ENCODE measurements at regions of chr2 and their contacts with region 1.

Region 1: GRCh38 chr2:146927080-146927711 is 917.6 kb upstream of the ACVR2A start:
- DNase-seq: peak; percentile 76
- H3K4me3 Mint-ChIP-seq: no peak overlapping the region
- H3K27ac Mint-ChIP-seq: no peak overlapping the region
- H3K4me1 Mint-ChIP-seq: peaks cover 13% of the 10 kb centered on the region
- H3K27me3 Mint-ChIP-seq: no peaks in the 10 kb centered on the region
- CTCF ChIP-seq: peak; percentile 55

Region 2: GRCh38 chr2:146734042-146734820 is 193.0 kb before region 1 on chr2:
- CTCF ChIA-PET with region 1: interaction called, 9 read pairs
- intact Hi-C with region 1: loop called (anchors 2 kb)
- DNase-seq: peak; percentile 16
- H3K4me3 Mint-ChIP-seq: no peak overlapping the region
- H3K27ac Mint-ChIP-seq: no peak overlapping the region
- H3K4me1 Mint-ChIP-seq: no peaks in the 10 kb centered on the region
- H3K27me3 Mint-ChIP-seq: no peaks in the 10 kb centered on the region
- CTCF ChIP-seq: peak; percentile 49

Region 3: GRCh38 chr2:146853741-146854444 is 73.3 kb before region 1 on chr2:
- CTCF ChIA-PET with region 1: no interaction called
- intact Hi-C with region 1: no loop called
- DNase-seq: no peak
- H3K4me3 Mint-ChIP-seq: no peak overlapping the region
- H3K27ac Mint-ChIP-seq: no peak overlapping the region
- H3K4me1 Mint-ChIP-seq: no peaks in the 10 kb centered on the region
- H3K27me3 Mint-ChIP-seq: no peaks in the 10 kb centered on the region
- CTCF ChIP-seq: no peak

Region 4: DNA sequence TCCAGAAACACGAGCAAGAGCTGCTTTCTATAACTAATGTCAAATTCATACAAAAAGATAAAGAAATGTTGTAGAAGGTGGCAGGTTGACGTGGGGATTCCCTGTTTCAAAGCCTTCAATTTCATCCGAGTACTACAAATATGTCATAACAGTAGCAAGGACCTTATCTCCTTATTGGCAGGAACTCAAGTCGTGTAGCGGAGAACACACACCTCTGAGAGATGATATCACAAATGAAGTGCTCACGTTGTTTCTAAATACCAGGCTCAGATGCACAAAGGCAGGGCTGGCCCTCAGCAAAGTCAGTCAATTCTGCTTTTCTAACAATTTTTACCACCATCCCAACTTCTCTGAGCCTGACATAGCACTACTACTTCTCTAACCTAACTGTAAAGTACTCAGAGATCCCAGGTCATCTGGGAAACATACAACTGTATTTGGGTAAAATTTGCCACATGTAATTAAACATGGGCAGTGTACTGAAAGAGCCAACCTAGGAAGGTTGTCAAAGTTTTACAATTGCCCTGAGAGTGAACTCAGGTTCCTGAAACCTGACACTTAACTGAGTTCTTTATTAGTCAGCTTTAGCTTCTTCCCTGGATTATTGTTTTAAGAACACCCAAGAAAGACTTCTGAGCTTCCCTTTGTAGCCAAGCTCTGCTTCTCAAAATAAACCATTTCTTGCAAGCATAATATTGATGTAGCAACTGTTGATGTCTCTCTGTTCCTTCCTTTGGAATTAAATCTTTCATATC is 103.9 kb after region 1 on chr2:
- CTCF ChIA-PET with region 1: interaction called, 4 read pairs
- intact Hi-C with region 1: loop called (anchors 2 kb)
- DNase-seq: peak; percentile 36
- H3K4me3 Mint-ChIP-seq: peak overlapping the region; percentile 64
- H3K27ac Mint-ChIP-seq: peak overlapping the region; percentile 79
- H3K4me1 Mint-ChIP-seq: peaks cover 71% of the 10 kb centered on the region
- H3K27me3 Mint-ChIP-seq: no peaks in the 10 kb centered on the region
- CTCF ChIP-seq: no peak

Region 5: GRCh38 chr2:147045113-147045512 is 117.9 kb after region 1 on chr2:
- CTCF ChIA-PET with region 1: interaction called, 11 read pairs
- intact Hi-C with region 1: no loop called
- DNase-seq: peak; percentile 77
- H3K4me3 Mint-ChIP-seq: no peak overlapping the region
- H3K27ac Mint-ChIP-seq: peak overlapping the region; percentile 2
- H3K4me1 Mint-ChIP-seq: peaks cover 22% of the 10 kb centered on the region
- H3K27me3 Mint-ChIP-seq: no peaks in the 10 kb centered on the region
- CTCF ChIP-seq: peak; percentile 82

Region 6: GRCh38 chr2:147082850-147083522 is 155.8 kb after region 1 on chr2:
- CTCF ChIA-PET with region 1: interaction called, 6 read pairs
- intact Hi-C with region 1: loop called (anchors 5 kb)
- DNase-seq: peak; percentile 68
- H3K4me3 Mint-ChIP-seq: no peak overlapping the region
- H3K27ac Mint-ChIP-seq: no peak overlapping the region
- H3K4me1 Mint-ChIP-seq: peaks cover 16% of the 10 kb centered on the region
- H3K27me3 Mint-ChIP-seq: no peaks in the 10 kb centered on the region
- CTCF ChIP-seq: peak; percentile 76

Region 7: DNA sequence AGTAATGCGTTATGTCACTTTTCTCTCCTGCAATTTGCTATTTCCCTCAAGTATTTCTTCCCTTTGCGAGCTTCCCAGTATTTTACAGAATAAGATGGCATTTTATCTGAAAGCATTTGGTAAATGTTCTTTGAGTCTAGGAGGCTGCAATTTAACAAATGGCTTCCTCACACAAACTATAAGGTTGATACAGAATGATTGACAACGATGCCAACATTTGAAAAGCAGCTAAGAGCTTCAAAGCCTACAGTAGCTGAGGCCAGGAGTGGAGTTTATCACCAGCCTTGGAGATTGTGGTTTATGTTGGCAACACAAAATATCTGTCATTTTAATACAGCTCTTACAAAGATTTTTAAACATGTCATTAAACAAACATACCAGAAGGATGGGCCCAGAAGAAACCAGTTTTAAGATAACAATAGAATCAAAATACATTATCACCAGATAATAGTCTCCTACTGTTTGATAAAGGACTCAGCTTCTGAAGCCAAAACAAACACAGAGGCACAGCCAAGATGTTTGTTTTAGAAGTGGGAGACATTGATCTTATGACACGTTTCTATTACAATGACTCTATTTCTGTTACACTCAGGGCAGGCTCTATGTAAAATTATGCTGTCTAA is 206.2 kb after region 1 on chr2:
- CTCF ChIA-PET with region 1: no interaction called
- intact Hi-C with region 1: loop called (anchors 5 kb)
- DNase-seq: no peak
- H3K4me3 Mint-ChIP-seq: no peak overlapping the region
- H3K27ac Mint-ChIP-seq: no peak overlapping the region
- H3K4me1 Mint-ChIP-seq: peaks cover 13% of the 10 kb centered on the region
- H3K27me3 Mint-ChIP-seq: no peaks in the 10 kb centered on the region
- CTCF ChIP-seq: no peak

Region 8: GRCh38 chr2:147331790-147332419 is 404.7 kb after region 1 on chr2:
- CTCF ChIA-PET with region 1: interaction called, 7 read pairs
- intact Hi-C with region 1: loop called (anchors 1 kb)
- DNase-seq: peak; percentile 53
- H3K4me3 Mint-ChIP-seq: no peak overlapping the region
- H3K27ac Mint-ChIP-seq: no peak overlapping the region
- H3K4me1 Mint-ChIP-seq: no peaks in the 10 kb centered on the region
- H3K27me3 Mint-ChIP-seq: no peaks in the 10 kb centered on the region
- CTCF ChIP-seq: peak; percentile 34